CD4-positive, alpha-beta memory T cell (primary cell): ENCODE measurements at regions of chr6 and their contacts with region 1.

Region 1: GRCh38 chr6:30717042-30717844 is at the start of gene MDC1:
- DNase-seq: peak; percentile 99 to 100 (median 100)
- H3K4me3 ChIP-seq: peak within 1 kb of the TSS; percentile 67 to 80
- H3K4me3 Mint-ChIP-seq: peak within 1 kb of the TSS; percentile 88 to 99 (median 98)
- H3K27ac ChIP-seq: peak within 1 kb of the TSS; percentile 69
- H3K27ac Mint-ChIP-seq: peak within 1 kb of the TSS; percentile 96 to 100 (median 98)
- H3K4me1 ChIP-seq: peaks cover 40% of the 10 kb centered on the region
- H3K4me1 Mint-ChIP-seq: peaks cover 22 to 70% (median 44%) of the 10 kb centered on the region in 4 donors
- H3K27me3 ChIP-seq: no peaks in the 10 kb centered on the region
- H3K27me3 Mint-ChIP-seq: no peaks in the 10 kb centered on the region
- total RNA-seq, gene MDC1: 60.7 to 73.5 TPM

Region 2: DNA sequence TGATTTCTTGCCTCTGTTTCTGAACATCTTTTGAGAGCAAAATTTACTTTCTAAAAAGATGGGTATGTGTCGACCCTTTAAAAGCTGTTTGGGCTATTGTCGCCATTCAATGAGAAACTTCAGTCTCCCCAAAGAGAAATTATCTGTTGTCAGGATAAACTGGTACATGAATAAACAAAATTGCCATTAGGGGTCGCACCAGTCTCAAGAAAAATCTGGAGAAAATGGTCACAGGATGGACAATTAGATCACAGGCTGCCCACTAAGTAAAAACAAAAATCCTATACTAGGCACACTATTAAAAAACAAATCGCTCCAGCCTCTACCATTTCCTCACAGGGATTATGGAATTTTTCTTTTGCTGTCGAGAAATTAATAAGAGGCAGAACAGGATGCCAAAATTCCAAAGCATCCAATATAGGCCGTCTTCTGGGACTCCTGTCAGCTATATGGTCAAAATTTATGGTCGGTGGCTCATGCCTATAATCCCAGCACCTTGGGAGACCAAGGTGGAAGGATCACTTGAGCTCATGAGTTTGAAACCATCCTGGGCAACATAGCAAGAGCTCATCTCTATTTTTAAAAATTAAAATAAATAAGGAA is 233.5 kb before region 1 on chr6:
- CTCF ChIA-PET with region 1: interaction called, 5 read pairs
- POLR2A ChIA-PET with region 1: interaction called, 7 read pairs
- intact Hi-C with region 1: loop called (anchors 1 kb)
- DNase-seq: peak in 4 of 5 donors; percentile 44 to 57 (median 48)
- H3K4me3 ChIP-seq: no peak overlapping the region
- H3K4me3 Mint-ChIP-seq: no peak overlapping the region
- H3K27ac ChIP-seq: no peak overlapping the region
- H3K27ac Mint-ChIP-seq: peak overlapping the region in 2 of 7 donors; percentile 8 to 29
- H3K4me1 ChIP-seq: peaks cover 24% of the 10 kb centered on the region
- H3K4me1 Mint-ChIP-seq: peaks cover 27 to 42% (median 31%) of the 10 kb centered on the region in 4 donors
- H3K27me3 ChIP-seq: peaks cover 22% of the 10 kb centered on the region
- H3K27me3 Mint-ChIP-seq: peaks cover 18 to 22% of the 10 kb centered on the region in 2 donors

Region 3: GRCh38 chr6:30515932-30516753 is 201.1 kb before region 1 on chr6:
- CTCF ChIA-PET with region 1: no interaction called
- POLR2A ChIA-PET with region 1: interaction called, 4 read pairs
- intact Hi-C with region 1: loop called (anchors 1 kb)
- DNase-seq: peak; percentile 91 to 98 (median 96)
- H3K4me3 ChIP-seq: peak overlapping the region; percentile 42 to 64
- H3K4me3 Mint-ChIP-seq: peak overlapping the region; percentile 85 to 92 (median 88)
- H3K27ac ChIP-seq: peak overlapping the region; percentile 91
- H3K27ac Mint-ChIP-seq: peak overlapping the region; percentile 95 to 99 (median 99)
- H3K4me1 ChIP-seq: peaks cover 66% of the 10 kb centered on the region
- H3K4me1 Mint-ChIP-seq: peaks cover 28 to 78% (median 49%) of the 10 kb centered on the region in 4 donors
- H3K27me3 ChIP-seq: no peaks in the 10 kb centered on the region
- H3K27me3 Mint-ChIP-seq: no peaks in the 10 kb centered on the region

Region 4: DNA sequence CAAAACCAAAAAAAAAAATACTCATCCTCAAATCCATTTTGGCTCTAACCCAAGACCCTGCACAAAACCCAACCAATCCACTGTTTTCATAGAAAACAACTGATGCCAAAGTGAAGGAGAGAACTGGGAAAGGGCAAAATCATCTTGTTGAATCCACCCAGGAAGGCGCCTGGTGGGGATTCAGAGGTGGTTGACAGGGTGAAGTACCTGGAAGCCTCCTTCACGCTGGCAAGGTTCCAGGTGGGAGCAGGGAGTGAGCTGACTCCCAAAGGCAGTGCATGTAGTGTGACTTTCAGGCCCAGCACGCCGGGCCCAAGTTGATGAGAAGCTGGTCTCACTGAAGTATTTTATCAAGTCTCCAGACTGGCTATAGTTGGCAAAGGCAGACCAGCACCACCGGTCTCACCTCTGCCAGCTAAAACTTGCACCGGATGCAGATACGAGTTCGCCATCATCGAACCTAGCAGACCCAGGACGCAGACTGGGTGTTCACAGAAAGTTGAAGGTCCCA is 116.7 kb before region 1 on chr6:
- CTCF ChIA-PET with region 1: interaction called, 12 read pairs
- POLR2A ChIA-PET with region 1: interaction called, 8 read pairs
- intact Hi-C with region 1: no loop called
- DNase-seq: no peak
- H3K4me3 ChIP-seq: no peak overlapping the region
- H3K4me3 Mint-ChIP-seq: no peak overlapping the region
- H3K27ac ChIP-seq: no peak overlapping the region
- H3K27ac Mint-ChIP-seq: peak overlapping the region in 2 of 7 donors; percentile 41 to 64
- H3K4me1 ChIP-seq: no peaks in the 10 kb centered on the region
- H3K4me1 Mint-ChIP-seq: peaks cover 7 to 26% (median 17%) of the 10 kb centered on the region in 4 donors
- H3K27me3 ChIP-seq: no peaks in the 10 kb centered on the region
- H3K27me3 Mint-ChIP-seq: no peaks in the 10 kb centered on the region

Region 5: GRCh38 chr6:30646458-30647241 is 70.6 kb before region 1 on chr6 and contains the start of gene C6orf136:
- CTCF ChIA-PET with region 1: interaction called, 4 read pairs
- POLR2A ChIA-PET with region 1: interaction called, 7 read pairs
- intact Hi-C with region 1: loop called (anchors 1 kb)
- DNase-seq: peak; percentile 86 to 94 (median 93)
- H3K4me3 ChIP-seq: peak within 1 kb of the TSS; percentile 74 to 91
- H3K4me3 Mint-ChIP-seq: peak within 1 kb of the TSS; percentile 85 to 92 (median 89)
- H3K27ac ChIP-seq: peak within 1 kb of the TSS; percentile 89
- H3K27ac Mint-ChIP-seq: peak within 1 kb of the TSS; percentile 85 to 95 (median 92)
- H3K4me1 ChIP-seq: peaks cover 20% of the 10 kb centered on the region
- H3K4me1 Mint-ChIP-seq: peaks cover 17 to 29% (median 22%) of the 10 kb centered on the region in 4 donors
- H3K27me3 ChIP-seq: no peaks in the 10 kb centered on the region
- H3K27me3 Mint-ChIP-seq: no peaks in the 10 kb centered on the region
- total RNA-seq, gene C6orf136: 29.3 to 35.0 TPM

Region 6: GRCh38 chr6:30678964-30679726 is 38.1 kb before region 1 on chr6:
- CTCF ChIA-PET with region 1: interaction called, 865 read pairs
- POLR2A ChIA-PET with region 1: interaction called, 1,474 read pairs
- intact Hi-C with region 1: loop called (anchors 1 kb)
- DNase-seq: peak; percentile 87 to 92 (median 89)
- H3K4me3 ChIP-seq: peak overlapping the region; percentile 70 to 93
- H3K4me3 Mint-ChIP-seq: peak overlapping the region; percentile 97 to 100 (median 99)
- H3K27ac ChIP-seq: peak overlapping the region; percentile 94
- H3K27ac Mint-ChIP-seq: peak overlapping the region; percentile 88 to 99 (median 91)
- H3K4me1 ChIP-seq: peaks cover 38% of the 10 kb centered on the region
- H3K4me1 Mint-ChIP-seq: peaks cover 17 to 57% (median 34%) of the 10 kb centered on the region in 4 donors
- H3K27me3 ChIP-seq: no peaks in the 10 kb centered on the region
- H3K27me3 Mint-ChIP-seq: no peaks in the 10 kb centered on the region

Region 7: GRCh38 chr6:30703821-30704360 is 13.4 kb before region 1 on chr6:
- CTCF ChIA-PET with region 1: interaction called, 8 read pairs
- POLR2A ChIA-PET with region 1: interaction called, 1,474 read pairs
- intact Hi-C with region 1: no loop called
- DNase-seq: no peak
- H3K4me3 ChIP-seq: no peak overlapping the region
- H3K4me3 Mint-ChIP-seq: no peak overlapping the region
- H3K27ac ChIP-seq: no peak overlapping the region
- H3K27ac Mint-ChIP-seq: no peak overlapping the region
- H3K4me1 ChIP-seq: no peaks in the 10 kb centered on the region
- H3K4me1 Mint-ChIP-seq: peaks cover 0 to 5% (median 2%) of the 10 kb centered on the region in 4 donors
- H3K27me3 ChIP-seq: no peaks in the 10 kb centered on the region
- H3K27me3 Mint-ChIP-seq: no peaks in the 10 kb centered on the region